HepG2 (cell line): ENCODE measurements at regions of chr17 and their contacts with region 1.

Region 1: DNA sequence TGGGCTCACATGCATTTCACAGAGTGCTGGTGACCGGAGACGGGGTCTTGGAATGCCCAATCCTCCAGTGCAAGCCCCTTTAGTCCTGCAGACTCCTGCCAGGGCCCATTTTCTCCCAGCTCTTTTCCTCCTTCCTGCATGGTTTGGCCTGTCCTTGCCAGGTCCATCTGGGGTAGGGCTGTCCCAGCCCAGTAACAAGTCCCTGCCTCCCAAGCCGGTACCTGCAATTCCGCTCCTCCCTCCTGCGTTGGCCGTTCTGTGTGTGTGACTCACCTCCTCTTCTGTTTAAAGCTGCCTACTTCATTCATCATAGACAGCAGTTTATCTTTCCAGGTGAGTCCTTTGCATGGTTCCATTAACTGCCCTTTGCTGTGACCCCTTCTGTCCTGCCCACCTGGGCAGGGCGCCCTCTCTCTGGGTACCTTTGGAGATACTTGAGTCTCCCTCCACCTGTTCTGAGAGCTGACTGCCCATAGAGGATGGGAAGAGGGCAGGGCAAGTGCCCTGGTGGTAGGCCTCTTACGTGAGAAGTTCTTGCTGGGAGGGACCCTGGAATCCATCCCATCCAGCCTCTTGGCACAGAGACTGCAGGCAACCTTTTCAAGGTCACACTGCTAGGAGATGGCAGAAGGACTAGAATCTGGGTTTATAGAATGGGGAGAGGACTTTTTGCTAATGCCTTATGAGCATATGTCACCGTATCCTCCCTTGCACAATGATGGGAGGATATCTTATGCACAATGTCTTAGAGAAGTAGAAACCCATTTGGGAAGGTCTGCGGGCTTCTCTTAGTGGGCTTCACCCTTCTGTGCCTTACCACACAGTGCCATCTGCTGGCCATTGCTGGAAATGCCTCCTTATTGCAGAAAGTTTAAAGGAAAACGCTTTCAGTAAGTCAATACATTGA is 29.7 kb upstream of the LGALS9 start:
- DNase-seq: peak; percentile 56
- ATAC-seq: peak; percentile 17; the same call in 2 of the 3 replicates
- H3K4me3 ChIP-seq: no peak overlapping the region
- H3K27ac ChIP-seq: no peak overlapping the region
- H3K4me1 ChIP-seq: no peaks in the 10 kb centered on the region
- H3K27me3 ChIP-seq: no peaks in the 10 kb centered on the region
- CTCF ChIP-seq: peak; percentile 85
- EP300 ChIP-seq: no peak
- POLR2A ChIP-seq: no peak
- RAD21 ChIP-seq: peak; percentile 67

Region 2: GRCh38 chr17:27353461-27354050 is 247.8 kb before region 1 on chr17:
- CTCF ChIA-PET with region 1: interaction called, 14 read pairs
- POLR2A ChIA-PET with region 1: no interaction called
- in situ Hi-C with region 1: no loop called
- intact Hi-C with region 1: loop called (anchors 10 kb)
- DNase-seq: peak; percentile 87
- ATAC-seq: peak; percentile 96
- H3K4me3 ChIP-seq: peak overlapping the region; percentile 76 to 94 (median 82)
- H3K27ac ChIP-seq: peak overlapping the region; percentile 75
- H3K4me1 ChIP-seq: peaks cover 23% of the 10 kb centered on the region
- H3K27me3 ChIP-seq: peaks cover 0 to 1% of the 10 kb centered on the region in 2 experiments; a peak in 2 of 5 replicates
- CTCF ChIP-seq: peak; percentile 75
- EP300 ChIP-seq: peak; percentile 11 to 21; a peak in 1 of 4 replicates
- POLR2A ChIP-seq: peak; percentile 68 to 87; a peak in 3 of 4 replicates
- RAD21 ChIP-seq: peak; percentile 93

Region 3: GRCh38 chr17:27455914-27456680 is 145.2 kb before region 1 on chr17 and contains the start of gene KSR1:
- CTCF ChIA-PET with region 1: interaction called, 15 read pairs
- POLR2A ChIA-PET with region 1: interaction called, 5 read pairs
- in situ Hi-C with region 1: no loop called
- intact Hi-C with region 1: loop called (anchors 2 kb)
- DNase-seq: peak; percentile 60
- ATAC-seq: peak; percentile 80
- H3K4me3 ChIP-seq: peak within 1 kb of the TSS; percentile 83 to 87 (median 84)
- H3K27ac ChIP-seq: peak within 1 kb of the TSS; percentile 82
- H3K4me1 ChIP-seq: peaks cover 40% of the 10 kb centered on the region
- H3K27me3 ChIP-seq: peaks cover 2 to 21% of the 10 kb centered on the region in 2 experiments; a peak in 3 of 5 replicates
- CTCF ChIP-seq: peak; percentile 77
- EP300 ChIP-seq: no peak
- POLR2A ChIP-seq: peak; percentile 43 to 76; a peak in 2 of 4 replicates
- RAD21 ChIP-seq: peak; percentile 71
- total RNA-seq, gene KSR1: 8.0 and 10.1 TPM in 2 replicates

Region 4: DNA sequence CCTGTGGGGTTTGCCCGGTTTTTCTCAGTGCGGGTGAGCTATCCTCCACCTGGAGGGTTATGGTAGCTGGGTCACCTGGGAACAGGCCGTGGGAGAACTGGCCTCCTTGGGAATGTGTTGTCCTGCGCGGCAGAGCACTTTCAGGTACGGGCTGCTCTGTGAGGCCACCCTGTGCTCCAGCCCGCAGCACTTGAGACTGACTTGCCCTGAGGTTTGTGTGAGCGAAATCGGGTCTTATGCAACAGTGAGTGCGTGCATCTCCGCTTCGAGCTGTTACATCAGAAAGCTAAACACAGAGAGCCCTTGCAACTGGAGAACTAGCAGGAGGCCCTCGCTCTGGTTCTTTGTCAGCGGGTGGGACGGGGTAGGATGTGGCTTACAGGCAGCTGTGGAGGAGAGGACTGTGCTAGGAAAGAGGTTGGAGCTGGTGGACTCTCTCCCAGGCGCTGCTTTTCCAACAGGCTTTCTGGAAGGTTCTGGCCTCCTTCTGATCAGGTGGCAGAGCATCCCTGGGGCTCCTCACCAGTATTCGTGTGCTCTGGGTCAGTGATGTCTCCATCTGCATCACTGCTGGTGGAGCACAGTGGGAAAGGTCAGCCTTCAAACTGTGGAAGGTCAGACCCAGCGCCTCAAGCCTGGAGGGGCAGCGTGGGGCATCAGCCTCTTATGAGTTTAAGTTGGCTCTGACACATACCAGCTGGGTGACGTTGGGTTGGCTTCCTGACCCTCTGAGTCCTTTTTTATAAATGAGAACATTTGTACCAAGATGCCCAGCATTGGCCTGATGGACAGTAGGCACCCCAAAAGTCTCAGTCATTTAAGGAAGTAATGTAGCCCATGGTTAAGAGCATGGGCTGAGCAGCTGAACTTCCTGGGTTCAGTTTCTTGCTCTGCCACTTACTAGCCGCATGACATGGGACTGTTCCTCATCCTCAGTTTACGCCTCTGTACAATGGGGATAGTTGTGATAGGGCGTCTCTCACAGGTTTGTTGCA is 68.8 kb before region 1 on chr17:
- CTCF ChIA-PET with region 1: no interaction called
- POLR2A ChIA-PET with region 1: no interaction called
- in situ Hi-C with region 1: loop called (anchors 10 kb)
- intact Hi-C with region 1: no loop called
- DNase-seq: peak; percentile 88
- ATAC-seq: peak; percentile 84
- H3K4me3 ChIP-seq: peak overlapping the region; percentile 13 to 55 (median 17); a peak in 4 of 6 replicates
- H3K27ac ChIP-seq: peak overlapping the region; percentile 25
- H3K4me1 ChIP-seq: peaks cover 84% of the 10 kb centered on the region
- H3K27me3 ChIP-seq: no peaks in the 10 kb centered on the region
- CTCF ChIP-seq: peak; percentile 13; the same call in 1 of the 2 replicates
- EP300 ChIP-seq: peak in 1 of 2 experiments; percentile 71; a peak in 2 of 4 replicates
- POLR2A ChIP-seq: no peak
- RAD21 ChIP-seq: no peak

Region 5: GRCh38 chr17:27577124-27577761 is 24.1 kb before region 1 on chr17:
- CTCF ChIA-PET with region 1: no interaction called
- POLR2A ChIA-PET with region 1: no interaction called
- in situ Hi-C with region 1: no loop called
- intact Hi-C with region 1: no loop called
- DNase-seq: no peak
- ATAC-seq: peak; percentile 28; the same call in 2 of the 3 replicates
- H3K4me3 ChIP-seq: no peak overlapping the region
- H3K27ac ChIP-seq: peak overlapping the region; percentile 33
- H3K4me1 ChIP-seq: peaks cover 78% of the 10 kb centered on the region
- H3K27me3 ChIP-seq: no peaks in the 10 kb centered on the region
- CTCF ChIP-seq: no peak
- EP300 ChIP-seq: no peak
- POLR2A ChIP-seq: no peak
- RAD21 ChIP-seq: no peak

Region 6: DNA sequence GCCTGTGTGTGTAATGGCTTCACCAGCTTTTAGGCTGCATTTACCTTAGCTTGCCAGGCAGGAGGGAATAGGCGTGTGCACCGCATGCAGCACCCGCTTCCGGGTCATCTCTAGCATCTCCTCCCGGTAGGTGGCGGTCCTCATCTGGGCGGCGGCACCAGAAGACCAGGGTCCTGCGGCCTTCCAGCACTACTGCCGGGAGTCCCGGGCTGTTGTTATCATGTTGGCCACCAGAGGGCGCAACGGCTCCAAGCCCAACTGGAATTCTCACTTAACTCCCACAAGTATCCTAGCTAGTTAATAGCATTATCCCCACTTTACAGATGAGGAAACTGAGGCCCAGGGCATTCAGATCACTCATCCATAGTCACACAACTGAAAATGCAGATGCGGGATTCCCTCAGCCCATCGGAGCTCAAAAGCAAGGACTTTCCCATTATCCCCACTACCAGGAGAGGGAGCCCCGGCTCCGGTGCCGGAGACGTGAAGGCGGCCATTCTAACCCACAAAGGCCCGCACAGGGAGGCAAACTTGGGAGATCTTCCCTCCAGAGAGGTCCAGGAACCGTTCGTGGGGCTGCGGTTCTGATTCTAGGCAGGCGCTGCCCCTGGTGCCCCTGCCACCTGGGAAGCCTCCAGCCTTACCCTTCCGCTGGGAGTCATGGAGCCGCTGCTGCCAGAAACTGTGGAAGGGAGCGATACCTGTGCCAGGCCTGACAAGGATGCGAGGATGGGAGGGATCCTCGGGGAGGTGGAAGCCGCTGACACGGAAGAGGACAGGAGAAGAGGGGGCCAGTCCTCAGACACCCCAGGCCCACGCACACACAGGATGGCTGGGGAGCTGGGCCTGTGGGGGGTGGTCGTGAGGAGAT is 53.6 kb after region 1 on chr17:
- CTCF ChIA-PET with region 1: interaction called, 16 read pairs
- POLR2A ChIA-PET with region 1: no interaction called
- in situ Hi-C with region 1: loop called (anchors 5 kb)
- intact Hi-C with region 1: loop called (anchors 1 kb)
- DNase-seq: peak; percentile 85
- ATAC-seq: peak; percentile 98
- H3K4me3 ChIP-seq: no peak overlapping the region
- H3K27ac ChIP-seq: no peak overlapping the region
- H3K4me1 ChIP-seq: no peaks in the 10 kb centered on the region
- H3K27me3 ChIP-seq: peaks cover 0 to 4% of the 10 kb centered on the region in 2 experiments; a peak in 3 of 5 replicates
- CTCF ChIP-seq: peak; percentile 87
- EP300 ChIP-seq: no peak
- POLR2A ChIP-seq: no peak
- RAD21 ChIP-seq: peak; percentile 77